Breast epithelium (tissue), 4 donors: ENCODE measurements at regions of chr15 and their contacts with region 1.

Region 1: DNA sequence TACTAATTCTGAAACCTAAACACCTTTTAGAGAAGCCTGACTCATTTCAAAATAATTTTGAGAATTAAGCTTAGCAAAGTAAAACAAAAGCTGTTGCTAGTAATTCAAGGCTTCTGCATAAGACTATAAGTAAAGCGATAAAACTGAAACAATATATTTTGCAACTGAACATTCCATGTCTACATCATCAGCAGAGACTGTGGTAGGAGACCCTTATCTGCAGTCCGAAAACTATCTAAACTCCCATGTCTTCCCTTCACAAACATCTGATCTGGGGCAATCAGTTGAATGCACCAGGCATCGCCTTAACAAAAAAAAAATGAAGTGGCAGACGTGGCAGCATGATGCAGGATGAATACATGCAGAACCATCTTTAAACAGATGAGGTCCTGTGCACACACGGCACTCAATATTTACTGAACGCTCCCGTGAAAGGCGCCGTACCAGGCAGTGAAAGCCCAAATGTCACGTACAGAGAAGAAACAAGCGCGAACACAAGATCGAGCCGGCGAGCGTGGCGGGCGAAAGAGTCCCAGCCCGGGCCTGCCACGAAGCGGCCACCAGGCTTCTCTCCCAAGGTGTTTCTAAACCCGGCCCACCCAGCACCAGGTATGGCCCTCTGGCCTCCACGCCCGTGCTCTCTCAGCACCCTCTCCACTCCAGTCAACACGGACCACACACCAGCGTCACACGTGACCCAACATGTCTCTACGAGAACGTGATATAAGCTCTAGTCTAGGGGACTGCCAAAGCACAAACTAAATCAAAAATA is 63.0 kb downstream of the CHSY1 start:
- DNase-seq: no peak
- H3K4me3 ChIP-seq: peak overlapping the region in 2 of 3 donors; percentile 13 to 48
- H3K27ac ChIP-seq: peak overlapping the region; percentile 36 to 81
- H3K4me1 ChIP-seq: peaks cover 8 to 25% of the 10 kb centered on the region in 2 donors
- H3K27me3 ChIP-seq: no peaks in the 10 kb centered on the region
- CTCF ChIP-seq: no peak
- POLR2A ChIP-seq: no peak

Region 2: DNA sequence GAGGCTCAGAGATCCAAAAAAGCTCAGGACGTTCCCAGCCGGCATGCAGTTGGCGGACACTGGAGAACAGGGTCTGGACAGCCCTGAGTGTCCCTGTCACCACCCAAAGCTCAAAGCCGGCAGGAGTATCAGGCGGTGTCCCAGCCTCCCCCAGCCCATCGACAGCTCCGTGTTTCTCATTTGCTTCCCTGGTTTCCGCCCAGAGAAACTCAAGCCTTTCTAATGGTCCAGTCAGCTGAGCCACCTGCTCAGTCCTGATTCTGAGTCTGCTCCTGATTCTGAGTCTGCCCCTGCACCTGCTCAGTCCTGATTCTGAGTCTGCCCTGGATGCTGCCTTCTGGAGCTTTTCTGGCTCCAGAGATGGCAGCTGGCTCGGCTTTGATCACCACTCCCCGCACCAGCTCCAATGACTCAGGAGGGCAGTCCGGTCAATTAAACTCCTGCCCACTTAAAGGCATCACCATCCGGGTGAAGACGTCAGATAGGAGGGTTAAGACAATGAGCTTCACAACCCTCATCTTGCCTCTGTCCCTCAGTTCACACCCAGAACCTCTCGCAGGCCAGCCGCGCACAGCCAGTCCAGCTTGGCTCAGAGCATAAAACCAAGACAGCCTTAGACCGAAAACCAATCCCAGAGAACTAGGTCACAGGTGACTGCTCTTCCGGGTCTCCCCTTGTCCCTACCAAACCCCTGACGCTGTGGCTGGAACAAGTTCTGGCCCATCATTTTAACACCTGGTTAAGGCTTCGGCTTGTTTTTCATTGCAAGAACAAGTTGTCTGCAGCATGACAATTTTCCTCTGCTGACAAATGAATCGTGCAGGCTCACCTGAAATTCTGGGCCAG is 293.9 kb after region 1 on chr15:
- intact Hi-C with region 1: loop called (anchors 5 kb)
- DNase-seq: no peak
- H3K4me3 ChIP-seq: no peak overlapping the region
- H3K27ac ChIP-seq: no peak overlapping the region
- H3K4me1 ChIP-seq: no peaks in the 10 kb centered on the region
- H3K27me3 ChIP-seq: no peaks in the 10 kb centered on the region
- CTCF ChIP-seq: no peak
- POLR2A ChIP-seq: no peak